CD4-positive, alpha-beta memory T cell (primary cell): ENCODE measurements at regions of chr19 and their contacts with region 1.

Region 1: DNA sequence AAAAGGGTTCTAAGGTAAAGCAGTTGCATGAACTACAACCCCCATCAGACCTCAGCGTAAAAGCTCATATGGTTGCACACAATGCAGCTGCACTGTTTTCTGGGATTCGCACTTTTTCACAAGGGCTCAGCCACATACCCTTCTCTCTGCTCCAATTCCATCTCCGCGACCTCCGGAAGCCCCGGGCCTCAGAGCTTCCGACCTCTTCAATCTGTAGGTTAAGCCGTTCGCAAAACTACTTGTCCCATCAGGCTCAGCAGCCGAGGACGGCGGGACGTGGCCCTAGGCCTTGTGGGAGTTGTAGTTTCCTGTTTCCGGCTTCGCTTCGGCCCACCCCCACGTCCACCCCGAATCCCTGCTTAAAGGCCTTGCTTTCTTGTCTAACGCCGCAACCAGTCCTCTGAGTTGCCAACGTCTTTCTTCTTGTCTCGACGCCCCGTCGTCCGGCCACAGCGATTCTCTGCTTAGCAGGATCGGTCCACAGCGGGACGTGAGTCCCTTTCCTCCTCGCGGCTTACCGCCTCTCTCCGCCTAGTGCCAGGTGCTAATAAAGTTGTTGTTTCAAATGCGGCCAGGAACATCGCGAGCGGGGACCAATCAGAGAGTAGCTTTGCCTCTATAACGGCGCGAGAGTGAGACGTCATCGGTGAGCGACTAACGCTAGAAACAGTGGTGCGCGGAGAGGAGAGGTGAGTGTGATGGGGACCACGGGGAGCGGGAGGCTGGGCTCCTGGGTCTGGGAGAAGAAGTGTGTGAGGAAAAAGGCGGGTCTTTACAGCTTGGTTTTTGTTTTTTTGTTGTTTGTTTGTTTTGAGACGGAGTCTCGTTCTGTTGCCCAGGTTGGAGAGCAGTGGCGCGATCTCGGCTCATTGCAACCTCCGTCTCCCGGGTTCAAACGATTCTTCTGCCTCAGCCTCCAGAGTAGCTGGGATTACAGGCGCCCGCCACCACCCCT is at the starts of genes PRPF31 and TFPT:
- DNase-seq: peak; percentile 97 to 98 (median 97)
- H3K4me3 ChIP-seq: peak within 1 kb of the TSS; percentile 80 to 81
- H3K4me3 Mint-ChIP-seq: peak within 1 kb of the TSS; percentile 86 to 99 (median 95)
- H3K27ac ChIP-seq: peak within 1 kb of the TSS; percentile 75
- H3K27ac Mint-ChIP-seq: peak within 1 kb of the TSS; percentile 91 to 97 (median 95)
- H3K4me1 ChIP-seq: peaks cover 27% of the 10 kb centered on the region
- H3K4me1 Mint-ChIP-seq: peaks cover 22 to 44% (median 28%) of the 10 kb centered on the region in 4 donors
- H3K27me3 ChIP-seq: no peaks in the 10 kb centered on the region
- H3K27me3 Mint-ChIP-seq: peaks cover 0 to 2% of the 10 kb centered on the region in 2 donors
- total RNA-seq, gene PRPF31: 77.6 to 80.0 TPM
- total RNA-seq, gene TFPT: 17.2 to 19.0 TPM

Region 2: GRCh38 chr19:53977429-53977990 is 137.9 kb before region 1 on chr19:
- CTCF ChIA-PET with region 1: no interaction called
- POLR2A ChIA-PET with region 1: no interaction called
- intact Hi-C with region 1: no loop called
- DNase-seq: peak; percentile 57 to 77 (median 68)
- H3K4me3 ChIP-seq: peak overlapping the region; percentile 9 to 58
- H3K4me3 Mint-ChIP-seq: peak overlapping the region; percentile 69 to 91 (median 88)
- H3K27ac ChIP-seq: no peak overlapping the region
- H3K27ac Mint-ChIP-seq: peak overlapping the region in 3 of 7 donors; percentile 10 to 69 (median 66)
- H3K4me1 ChIP-seq: peaks cover 27% of the 10 kb centered on the region
- H3K4me1 Mint-ChIP-seq: peaks cover 13 to 43% (median 22%) of the 10 kb centered on the region in 4 donors
- H3K27me3 ChIP-seq: peaks cover 32% of the 10 kb centered on the region
- H3K27me3 Mint-ChIP-seq: peaks cover 43 to 53% of the 10 kb centered on the region in 2 donors

Region 3: GRCh38 chr19:54096617-54097129 is 18.7 kb before region 1 on chr19:
- CTCF ChIA-PET with region 1: interaction called, 13 read pairs
- POLR2A ChIA-PET with region 1: interaction called, 78 read pairs
- intact Hi-C with region 1: no loop called
- DNase-seq: peak in 4 of 5 donors; percentile 30 to 50 (median 43)
- H3K4me3 ChIP-seq: no peak overlapping the region
- H3K4me3 Mint-ChIP-seq: peak overlapping the region; percentile 29 to 87 (median 62)
- H3K27ac ChIP-seq: no peak overlapping the region
- H3K27ac Mint-ChIP-seq: peak overlapping the region; percentile 45 to 91 (median 82)
- H3K4me1 ChIP-seq: peaks cover 13% of the 10 kb centered on the region
- H3K4me1 Mint-ChIP-seq: peaks cover 8 to 20% (median 10%) of the 10 kb centered on the region in 4 donors
- H3K27me3 ChIP-seq: no peaks in the 10 kb centered on the region
- H3K27me3 Mint-ChIP-seq: peaks cover 6 to 7% of the 10 kb centered on the region in 2 donors

Region 4: DNA sequence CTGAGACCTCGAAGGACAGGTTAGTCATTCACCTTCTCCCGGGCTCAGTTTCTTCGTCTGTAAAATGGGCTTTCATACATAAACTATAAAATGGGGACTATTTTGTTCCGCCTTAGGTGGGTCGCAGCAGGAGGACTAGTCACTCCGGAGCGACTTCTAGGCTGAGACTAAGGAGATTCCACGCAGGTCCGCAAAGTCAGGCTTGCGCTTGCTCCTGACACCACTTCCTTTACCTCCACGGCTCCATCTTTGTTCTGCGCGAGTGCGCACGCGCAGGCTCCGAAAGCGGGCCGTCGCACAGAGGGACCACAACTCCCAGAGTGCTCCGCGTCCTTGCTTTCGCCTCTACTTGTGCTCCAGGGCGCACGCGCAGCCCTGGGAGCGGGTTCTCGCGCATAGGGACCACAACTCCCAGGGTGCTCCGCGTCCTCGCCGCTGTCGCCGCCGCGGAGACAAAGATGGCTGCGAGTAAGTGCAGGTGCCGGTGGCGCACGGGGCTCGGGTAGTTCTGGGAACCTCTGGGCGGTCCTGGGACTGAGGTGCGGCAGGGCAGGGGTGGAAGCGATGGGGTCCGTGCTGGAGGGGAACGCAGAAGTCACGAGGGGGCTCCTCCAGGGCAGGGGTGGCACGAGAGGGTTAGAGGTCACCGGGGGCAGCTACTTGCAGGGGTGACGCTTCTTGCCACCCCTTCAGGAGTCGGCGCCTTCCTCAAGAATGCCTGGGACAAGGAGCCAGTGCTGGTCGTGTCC is 12.8 kb before region 1 on chr19 and contains the start of gene NDUFA3:
- CTCF ChIA-PET with region 1: interaction called, 13 read pairs
- POLR2A ChIA-PET with region 1: interaction called, 78 read pairs
- intact Hi-C with region 1: loop called (anchors 1 kb)
- DNase-seq: peak; percentile 96 to 99 (median 98)
- H3K4me3 ChIP-seq: peak within 1 kb of the TSS; percentile 54 to 83
- H3K4me3 Mint-ChIP-seq: peak within 1 kb of the TSS; percentile 95 to 100 (median 97)
- H3K27ac ChIP-seq: peak within 1 kb of the TSS; percentile 65
- H3K27ac Mint-ChIP-seq: peak within 1 kb of the TSS; percentile 81 to 98 (median 96)
- H3K4me1 ChIP-seq: peaks cover 17% of the 10 kb centered on the region
- H3K4me1 Mint-ChIP-seq: peaks cover 14 to 29% (median 19%) of the 10 kb centered on the region in 4 donors
- H3K27me3 ChIP-seq: no peaks in the 10 kb centered on the region
- H3K27me3 Mint-ChIP-seq: no peaks in the 10 kb centered on the region
- total RNA-seq, gene NDUFA3: 135 to 137 TPM

Region 5: GRCh38 chr19:54159352-54160181 is 44.2 kb after region 1 on chr19 and contains the start of gene LENG1:
- CTCF ChIA-PET with region 1: interaction called, 3 read pairs
- POLR2A ChIA-PET with region 1: interaction called, 42 read pairs
- intact Hi-C with region 1: loop called (anchors 1 kb)
- DNase-seq: peak; percentile 97 to 100 (median 100)
- H3K4me3 ChIP-seq: peak within 1 kb of the TSS; percentile 61 to 99
- H3K4me3 Mint-ChIP-seq: peak within 1 kb of the TSS; percentile 99 to 100 (median 100)
- H3K27ac ChIP-seq: peak within 1 kb of the TSS; percentile 78
- H3K27ac Mint-ChIP-seq: peak within 1 kb of the TSS; percentile 93 to 100 (median 100)
- H3K4me1 ChIP-seq: peaks cover 75% of the 10 kb centered on the region
- H3K4me1 Mint-ChIP-seq: peaks cover 39 to 85% (median 58%) of the 10 kb centered on the region in 4 donors
- H3K27me3 ChIP-seq: no peaks in the 10 kb centered on the region
- H3K27me3 Mint-ChIP-seq: no peaks in the 10 kb centered on the region
- total RNA-seq, gene LENG1: 19.6 to 22.7 TPM

Region 6: GRCh38 chr19:54203151-54203611 is 87.8 kb after region 1 on chr19:
- CTCF ChIA-PET with region 1: no interaction called
- POLR2A ChIA-PET with region 1: interaction called, 24 read pairs
- intact Hi-C with region 1: loop called (anchors 1 kb)
- DNase-seq: no peak
- H3K4me3 ChIP-seq: no peak overlapping the region
- H3K4me3 Mint-ChIP-seq: peak overlapping the region; percentile 10 to 100 (median 64)
- H3K27ac ChIP-seq: peak overlapping the region; percentile 89
- H3K27ac Mint-ChIP-seq: peak overlapping the region in 6 of 7 donors; percentile 66 to 99 (median 85)
- H3K4me1 ChIP-seq: peaks cover 74% of the 10 kb centered on the region
- H3K4me1 Mint-ChIP-seq: peaks cover 44 to 86% (median 62%) of the 10 kb centered on the region in 4 donors
- H3K27me3 ChIP-seq: no peaks in the 10 kb centered on the region
- H3K27me3 Mint-ChIP-seq: no peaks in the 10 kb centered on the region

Region 7: GRCh38 chr19:54448774-54449700 is 333.7 kb after region 1 on chr19 and contains the start of gene LENG8:
- CTCF ChIA-PET with region 1: no interaction called
- POLR2A ChIA-PET with region 1: interaction called, 3 read pairs
- intact Hi-C with region 1: loop called (anchors 1 kb)
- DNase-seq: peak; percentile 98 to 99 (median 99)
- H3K4me3 ChIP-seq: peak within 1 kb of the TSS; percentile 75 to 98
- H3K4me3 Mint-ChIP-seq: peak within 1 kb of the TSS; percentile 91 to 100 (median 98)
- H3K27ac ChIP-seq: peak within 1 kb of the TSS; percentile 93
- H3K27ac Mint-ChIP-seq: peak within 1 kb of the TSS; percentile 96 to 100 (median 99)
- H3K4me1 ChIP-seq: peaks cover 46% of the 10 kb centered on the region
- H3K4me1 Mint-ChIP-seq: peaks cover 25 to 69% (median 41%) of the 10 kb centered on the region in 4 donors
- H3K27me3 ChIP-seq: no peaks in the 10 kb centered on the region
- H3K27me3 Mint-ChIP-seq: peaks cover 0 to 3% of the 10 kb centered on the region in 2 donors
- total RNA-seq, gene LENG8: 535 to 565 TPM